Transverse colon (tissue), 4 donors: ENCODE measurements at regions of chr19 and their contacts with region 1.

Region 1: GRCh38 chr19:43290568-43291359 is 21.4 kb upstream of the PSG9 start:
- DNase-seq: no peak
- H3K4me3 ChIP-seq: no peak overlapping the region
- H3K27ac ChIP-seq: no peak overlapping the region
- H3K4me1 ChIP-seq: no peaks in the 10 kb centered on the region
- H3K27me3 ChIP-seq: no peaks in the 10 kb centered on the region
- CTCF ChIP-seq: no peak
- EP300 ChIP-seq: no peak
- POLR2A ChIP-seq: no peak

Region 2: GRCh38 chr19:43207991-43208390 is 82.8 kb before region 1 on chr19:
- in situ Hi-C with region 1: no loop called
- intact Hi-C with region 1: no loop called
- DNase-seq: no peak
- H3K4me3 ChIP-seq: no peak overlapping the region
- H3K27ac ChIP-seq: no peak overlapping the region
- H3K4me1 ChIP-seq: no peaks in the 10 kb centered on the region
- H3K27me3 ChIP-seq: no peaks in the 10 kb centered on the region
- CTCF ChIP-seq: no peak
- EP300 ChIP-seq: no peak
- POLR2A ChIP-seq: no peak

Region 3: GRCh38 chr19:43265664-43266025 is 25.1 kb before region 1 on chr19:
- in situ Hi-C with region 1: no loop called
- intact Hi-C with region 1: loop called (anchors 1 kb)
- DNase-seq: no peak
- H3K4me3 ChIP-seq: no peak overlapping the region
- H3K27ac ChIP-seq: no peak overlapping the region
- H3K4me1 ChIP-seq: no peaks in the 10 kb centered on the region
- H3K27me3 ChIP-seq: no peaks in the 10 kb centered on the region
- CTCF ChIP-seq: no peak
- EP300 ChIP-seq: no peak
- POLR2A ChIP-seq: no peak

Region 4: GRCh38 chr19:43362179-43362578 is 71.4 kb after region 1 on chr19:
- in situ Hi-C with region 1: no loop called
- intact Hi-C with region 1: no loop called
- DNase-seq: no peak
- H3K4me3 ChIP-seq: no peak overlapping the region
- H3K27ac ChIP-seq: no peak overlapping the region
- H3K4me1 ChIP-seq: peaks cover 0 to 7% (median 0%) of the 10 kb centered on the region in 4 donors
- H3K27me3 ChIP-seq: peaks cover 6% of the 10 kb centered on the region
- CTCF ChIP-seq: no peak
- EP300 ChIP-seq: no peak
- POLR2A ChIP-seq: no peak

Region 5: GRCh38 chr19:43575156-43575950 is 284.6 kb after region 1 on chr19 and contains the starts of genes PINLYP and XRCC1:
- in situ Hi-C with region 1: no loop called
- intact Hi-C with region 1: no loop called
- DNase-seq: peak; percentile 98
- H3K4me3 ChIP-seq: peak within 1 kb of the TSS; percentile 72 to 99 (median 88)
- H3K27ac ChIP-seq: peak within 1 kb of the TSS; percentile 81 to 94 (median 92)
- H3K4me1 ChIP-seq: peaks cover 5 to 27% (median 12%) of the 10 kb centered on the region in 4 donors
- H3K27me3 ChIP-seq: no peaks in the 10 kb centered on the region
- CTCF ChIP-seq: no peak
- EP300 ChIP-seq: no peak
- POLR2A ChIP-seq: peak; percentile 48
- total RNA-seq, gene PINLYP: 1.1 to 4.0 (median 1.6) TPM in 3 of 4 donors, not detected in the other
- total RNA-seq, gene XRCC1: 8.0 to 147 (median 15.8) TPM

Region 6: GRCh38 chr19:43723588-43723987 is 432.8 kb after region 1 on chr19:
- in situ Hi-C with region 1: no loop called
- intact Hi-C with region 1: no loop called
- DNase-seq: no peak
- H3K4me3 ChIP-seq: no peak overlapping the region
- H3K27ac ChIP-seq: no peak overlapping the region
- H3K4me1 ChIP-seq: no peaks in the 10 kb centered on the region
- H3K27me3 ChIP-seq: no peaks in the 10 kb centered on the region
- CTCF ChIP-seq: peak; percentile 26 to 60 (median 39)
- EP300 ChIP-seq: no peak
- POLR2A ChIP-seq: no peak